Common myeloid progenitor, CD34-positive (primary cell): ENCODE measurements at regions of chr6 and their contacts with region 1.

Region 1: GRCh38 chr6:33633462-33634158 is 12.5 kb downstream of the ITPR3 start:
- DNase-seq: peak; percentile 38 to 65 (median 58)
- H3K4me3 ChIP-seq: peak overlapping the region in 6 of 7 experiments; percentile 48 to 83 (median 65)
- H3K27ac ChIP-seq: no peak overlapping the region
- H3K4me1 ChIP-seq: peaks cover 0 to 20% (median 15%) of the 10 kb centered on the region in 4 experiments
- H3K27me3 ChIP-seq: peaks cover 0 to 13% (median 8%) of the 10 kb centered on the region in 5 experiments

Region 2: DNA sequence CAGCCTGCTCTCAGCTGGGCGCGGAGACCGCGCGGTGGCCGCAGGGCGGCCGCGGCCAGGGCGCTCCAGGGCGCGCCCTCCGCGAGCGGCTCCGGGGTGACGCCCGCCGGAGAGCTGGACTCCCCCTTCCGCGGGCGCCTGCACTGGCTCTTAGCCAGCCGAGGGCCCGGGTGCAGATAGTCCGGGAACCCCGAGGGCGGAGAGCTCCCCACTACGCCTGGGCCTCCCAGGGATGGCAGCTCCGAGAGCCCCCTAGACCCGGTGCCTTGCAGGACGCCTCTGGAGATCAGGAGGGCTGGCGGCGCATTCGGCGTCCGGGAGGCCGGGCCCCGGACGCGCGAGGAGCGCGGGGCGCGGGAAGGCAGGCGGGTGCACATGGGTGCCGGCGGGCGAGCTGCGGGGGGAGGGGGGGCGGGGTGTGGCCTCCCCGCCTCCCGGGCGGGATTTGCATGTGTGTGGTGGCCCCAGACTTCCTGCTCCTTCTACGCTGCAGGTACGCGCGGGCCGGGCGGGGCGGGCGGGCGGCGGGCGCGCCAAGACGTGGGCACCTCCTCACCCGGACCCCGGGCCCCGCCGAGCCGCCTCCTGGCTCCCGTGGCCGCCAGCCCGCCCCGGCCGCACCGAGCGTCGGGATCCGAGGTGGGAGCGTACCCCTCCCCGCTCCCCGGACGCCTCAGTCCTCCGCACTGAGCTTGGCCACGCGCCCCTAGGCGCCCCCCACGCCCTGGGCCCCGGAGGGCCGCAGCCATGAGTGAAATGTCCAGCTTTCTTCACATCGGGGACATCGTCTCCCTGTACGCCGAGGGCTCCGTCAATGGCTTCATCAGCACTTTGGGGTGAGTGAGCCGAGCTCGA is 12.5 kb before region 1 on chr6 and contains the start of gene ITPR3:
- CTCF ChIA-PET with region 1: interaction called, 18 read pairs
- POLR2A ChIA-PET with region 1: no interaction called
- DNase-seq: peak; percentile 34 to 66 (median 52)
- H3K4me3 ChIP-seq: peak within 1 kb of the TSS; percentile 65 to 96 (median 69)
- H3K27ac ChIP-seq: peak within 1 kb of the TSS in 1 of 2 experiments; percentile 46
- H3K4me1 ChIP-seq: peaks cover 2 to 26% (median 21%) of the 10 kb centered on the region in 4 experiments
- H3K27me3 ChIP-seq: peaks cover 0 to 16% (median 2%) of the 10 kb centered on the region in 5 experiments

Region 3: GRCh38 chr6:33886673-33887144 is 253.1 kb after region 1 on chr6:
- CTCF ChIA-PET with region 1: no interaction called
- POLR2A ChIA-PET with region 1: no interaction called
- DNase-seq: no peak
- H3K4me3 ChIP-seq: no peak overlapping the region
- H3K27ac ChIP-seq: no peak overlapping the region
- H3K4me1 ChIP-seq: no peaks in the 10 kb centered on the region
- H3K27me3 ChIP-seq: peaks cover 0 to 12% (median 0%) of the 10 kb centered on the region in 5 experiments